ENCODE measurements at regions of chr12 and their contacts with region 1.

Region 1: GRCh38 chr12:49130151-49131050 is 794 bp downstream of the TUBA1B start:
- DNase-seq: peak; percentile 91
- ATAC-seq: peak; percentile 50
- H3K4me3 Mint-ChIP-seq: peak overlapping the region; percentile 96
- H3K27ac Mint-ChIP-seq: peak overlapping the region; percentile 98
- H3K4me1 Mint-ChIP-seq: peaks cover 55% of the 10 kb centered on the region
- H3K27me3 Mint-ChIP-seq: no peaks in the 10 kb centered on the region
- CTCF ChIP-seq: no peak

Region 2: DNA sequence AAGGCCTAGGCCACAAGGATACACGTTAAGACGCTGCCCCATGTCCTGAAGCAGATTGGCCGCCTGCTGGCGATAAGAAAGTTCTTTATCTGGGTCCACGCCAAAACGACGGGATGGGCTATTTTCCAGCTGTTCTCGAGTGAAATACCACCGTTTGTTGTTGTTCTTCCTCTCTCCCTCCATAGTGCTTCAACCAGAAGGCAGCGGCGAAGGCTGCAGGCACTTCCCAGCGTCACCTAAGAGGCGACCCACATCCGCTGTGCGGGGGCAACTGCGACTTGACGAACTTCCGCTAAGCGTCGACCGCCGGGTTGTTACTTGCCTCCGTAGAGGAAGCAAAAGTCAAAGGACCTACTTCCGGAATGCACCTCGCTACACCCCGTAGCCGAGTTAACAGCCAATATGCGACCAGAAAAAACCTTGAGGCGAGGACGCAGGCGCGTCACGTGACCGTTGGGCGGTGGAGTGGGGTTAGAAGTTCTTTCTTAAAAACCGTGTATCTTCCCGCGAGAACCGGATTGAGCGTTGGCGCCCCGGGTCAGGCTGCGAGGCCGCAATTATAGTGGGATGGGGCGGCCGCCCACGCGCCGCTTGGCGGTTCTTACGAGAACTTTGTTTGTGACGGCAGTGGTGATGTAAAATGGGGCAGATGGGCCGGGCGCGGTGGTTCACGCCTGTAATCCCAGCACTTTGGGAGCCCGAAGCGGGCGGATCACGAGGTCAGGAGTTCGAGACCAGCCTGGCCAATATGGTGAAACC is 413.7 kb before region 1 on chr12 and contains the start of gene CCNT1:
- CTCF ChIA-PET with region 1: no interaction called
- POLR2A ChIA-PET with region 1: no interaction called
- intact Hi-C with region 1: loop called (anchors 1 kb)
- DNase-seq: peak; percentile 92
- ATAC-seq: peak; percentile 91
- H3K4me3 Mint-ChIP-seq: peak within 1 kb of the TSS; percentile 87
- H3K27ac Mint-ChIP-seq: peak within 1 kb of the TSS; percentile 97
- H3K4me1 Mint-ChIP-seq: peaks cover 39% of the 10 kb centered on the region
- H3K27me3 Mint-ChIP-seq: peaks cover 2% of the 10 kb centered on the region
- CTCF ChIP-seq: no peak
- total RNA-seq, gene CCNT1: 48.9 and 49.6 TPM in 2 replicates

Region 3: DNA sequence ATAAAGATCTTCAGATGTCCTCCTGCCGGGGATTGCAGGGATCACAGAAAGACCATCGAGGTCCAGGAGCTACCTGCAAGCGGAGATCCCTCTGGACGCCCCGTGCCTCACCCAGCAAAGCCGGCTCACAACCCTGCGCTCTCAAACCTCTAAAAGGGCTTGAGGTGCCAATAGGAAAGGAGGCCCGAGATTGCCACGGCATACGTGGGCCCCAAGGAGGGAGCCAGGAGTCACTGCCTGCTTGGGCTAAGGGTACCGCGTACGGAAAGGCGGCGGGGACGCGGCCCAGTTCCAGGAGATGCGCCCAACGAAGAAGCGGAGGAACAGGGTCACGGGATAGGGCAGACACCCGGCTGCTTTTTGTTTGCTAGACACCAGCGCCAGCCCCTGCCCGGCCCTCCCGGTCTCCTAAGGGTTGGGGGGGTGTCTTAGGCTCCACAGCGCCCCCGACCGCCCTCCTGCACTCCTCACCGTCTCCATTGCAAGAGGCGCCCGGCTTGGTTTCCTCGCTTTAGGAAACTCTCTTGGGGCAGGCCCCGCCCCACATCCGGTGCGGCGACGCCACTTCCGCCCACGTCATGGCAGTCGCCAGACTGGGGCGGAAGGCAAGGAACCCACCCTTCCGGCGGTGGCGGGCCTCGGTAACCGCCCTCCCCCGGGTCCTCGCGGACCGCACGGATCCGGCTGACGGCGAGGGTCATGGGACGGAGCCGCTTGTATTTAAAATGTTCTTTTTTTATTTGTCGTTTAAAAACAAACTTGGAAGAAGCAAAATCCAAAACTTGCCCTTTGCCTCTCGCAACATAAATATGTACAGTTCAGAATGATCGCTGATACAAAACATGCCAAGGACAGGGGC is 111.9 kb before region 1 on chr12 and contains the start of gene PRKAG1:
- CTCF ChIA-PET with region 1: no interaction called
- POLR2A ChIA-PET with region 1: interaction called, 13 read pairs
- intact Hi-C with region 1: loop called (anchors 1 kb)
- DNase-seq: peak; percentile 97
- ATAC-seq: peak; percentile 86
- H3K4me3 Mint-ChIP-seq: peak within 1 kb of the TSS; percentile 93
- H3K27ac Mint-ChIP-seq: peak within 1 kb of the TSS; percentile 98
- H3K4me1 Mint-ChIP-seq: peaks cover 31% of the 10 kb centered on the region
- H3K27me3 Mint-ChIP-seq: no peaks in the 10 kb centered on the region
- CTCF ChIP-seq: no peak
- total RNA-seq, gene PRKAG1: 55.3 and 70.5 TPM in 2 replicates

Region 4: GRCh38 chr12:49088190-49088931 is 42.0 kb before region 1 on chr12:
- CTCF ChIA-PET with region 1: interaction called, 31 read pairs
- POLR2A ChIA-PET with region 1: interaction called, 44 read pairs
- intact Hi-C with region 1: loop called (anchors 1 kb)
- DNase-seq: peak; percentile 53
- ATAC-seq: peak; percentile 93
- H3K4me3 Mint-ChIP-seq: peak overlapping the region; percentile 64
- H3K27ac Mint-ChIP-seq: no peak overlapping the region
- H3K4me1 Mint-ChIP-seq: peaks cover 42% of the 10 kb centered on the region
- H3K27me3 Mint-ChIP-seq: peaks cover 45% of the 10 kb centered on the region
- CTCF ChIP-seq: peak; percentile 35

Region 5: GRCh38 chr12:49110464-49111155 is 19.8 kb before region 1 on chr12 and contains the start of gene LMBR1L:
- CTCF ChIA-PET with region 1: interaction called, 21 read pairs
- POLR2A ChIA-PET with region 1: interaction called, 107 read pairs
- intact Hi-C with region 1: loop called (anchors 1 kb)
- DNase-seq: peak; percentile 83
- ATAC-seq: peak; percentile 94
- H3K4me3 Mint-ChIP-seq: peak within 1 kb of the TSS; percentile 98
- H3K27ac Mint-ChIP-seq: peak within 1 kb of the TSS; percentile 96
- H3K4me1 Mint-ChIP-seq: peaks cover 46% of the 10 kb centered on the region
- H3K27me3 Mint-ChIP-seq: no peaks in the 10 kb centered on the region
- CTCF ChIP-seq: no peak
- total RNA-seq, gene LMBR1L: 64.2 and 79.9 TPM in 2 replicates

Region 6: GRCh38 chr12:49188914-49189367 is 58.5 kb after region 1 on chr12 and contains the start of gene TUBA1A:
- CTCF ChIA-PET with region 1: interaction called, 27 read pairs
- POLR2A ChIA-PET with region 1: interaction called, 190 read pairs
- intact Hi-C with region 1: loop called (anchors 1 kb)
- DNase-seq: peak; percentile 83
- ATAC-seq: peak; percentile 86
- H3K4me3 Mint-ChIP-seq: peak within 1 kb of the TSS; percentile 97
- H3K27ac Mint-ChIP-seq: peak within 1 kb of the TSS; percentile 99
- H3K4me1 Mint-ChIP-seq: peaks cover 20% of the 10 kb centered on the region
- H3K27me3 Mint-ChIP-seq: no peaks in the 10 kb centered on the region
- CTCF ChIP-seq: no peak
- total RNA-seq, gene TUBA1A: 114 and 115 TPM in 2 replicates

Region 7: GRCh38 chr12:49264738-49265515 is 134.5 kb after region 1 on chr12 and contains the start of gene TUBA1C:
- CTCF ChIA-PET with region 1: no interaction called
- POLR2A ChIA-PET with region 1: interaction called, 46 read pairs
- intact Hi-C with region 1: loop called (anchors 1 kb)
- DNase-seq: peak; percentile 90
- ATAC-seq: peak; percentile 90
- H3K4me3 Mint-ChIP-seq: peak within 1 kb of the TSS; percentile 94
- H3K27ac Mint-ChIP-seq: peak within 1 kb of the TSS; percentile 92
- H3K4me1 Mint-ChIP-seq: peaks cover 20% of the 10 kb centered on the region
- H3K27me3 Mint-ChIP-seq: no peaks in the 10 kb centered on the region
- CTCF ChIP-seq: no peak
- total RNA-seq, gene TUBA1C: 141 and 142 TPM in 2 replicates

Measured in activated B cell treated with CpG ODN at 0.5 μM for 24 hours (primary cell).